Caco-2 (cell line): ENCODE measurements at regions of chr5 and their contacts with region 1.

Region 1: DNA sequence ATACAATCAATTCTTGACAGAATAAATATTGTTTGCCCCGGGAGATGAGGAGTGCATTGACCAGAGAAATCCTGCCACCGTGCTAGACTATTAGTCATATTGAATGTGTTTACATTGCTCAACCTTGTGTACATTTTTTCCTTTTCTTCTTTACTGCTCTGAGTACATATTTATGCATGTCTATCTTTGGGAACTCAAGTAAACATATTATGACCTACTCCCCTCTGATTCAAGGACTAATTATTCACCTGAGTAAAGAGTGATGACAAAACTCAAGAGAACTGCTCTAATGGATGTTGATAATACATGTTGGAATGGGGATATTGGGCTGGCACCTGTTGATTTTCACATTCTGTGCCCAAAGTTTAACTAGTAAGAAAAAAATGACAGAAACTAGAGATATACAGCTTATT is 3.9 kb upstream of the SPINK1 start:
- DNase-seq: peak in 1 of 2 experiments; percentile 65
- H3K4me3 ChIP-seq: no peak overlapping the region
- H3K4me3 Mint-ChIP-seq: peak overlapping the region; percentile 10
- H3K27ac Mint-ChIP-seq: peak overlapping the region; percentile 48
- H3K4me1 ChIP-seq: peaks cover 81% of the 10 kb centered on the region
- H3K4me1 Mint-ChIP-seq: peaks cover 53% of the 10 kb centered on the region
- H3K27me3 ChIP-seq: no peaks in the 10 kb centered on the region
- H3K27me3 Mint-ChIP-seq: no peaks in the 10 kb centered on the region
- CTCF ChIP-seq: no peak

Region 2: GRCh38 chr5:147403651-147404640 is 431.4 kb before region 1 on chr5:
- CTCF ChIA-PET with region 1: no interaction called
- POLR2A ChIA-PET with region 1: no interaction called
- intact Hi-C with region 1: loop called (anchors 10 kb)
- DNase-seq: no peak
- H3K4me3 ChIP-seq: no peak overlapping the region
- H3K4me3 Mint-ChIP-seq: no peak overlapping the region
- H3K27ac Mint-ChIP-seq: peak overlapping the region; percentile 74
- H3K4me1 ChIP-seq: peaks cover 83% of the 10 kb centered on the region
- H3K4me1 Mint-ChIP-seq: peaks cover 43% of the 10 kb centered on the region
- H3K27me3 ChIP-seq: no peaks in the 10 kb centered on the region
- H3K27me3 Mint-ChIP-seq: no peaks in the 10 kb centered on the region
- CTCF ChIP-seq: no peak

Region 3: DNA sequence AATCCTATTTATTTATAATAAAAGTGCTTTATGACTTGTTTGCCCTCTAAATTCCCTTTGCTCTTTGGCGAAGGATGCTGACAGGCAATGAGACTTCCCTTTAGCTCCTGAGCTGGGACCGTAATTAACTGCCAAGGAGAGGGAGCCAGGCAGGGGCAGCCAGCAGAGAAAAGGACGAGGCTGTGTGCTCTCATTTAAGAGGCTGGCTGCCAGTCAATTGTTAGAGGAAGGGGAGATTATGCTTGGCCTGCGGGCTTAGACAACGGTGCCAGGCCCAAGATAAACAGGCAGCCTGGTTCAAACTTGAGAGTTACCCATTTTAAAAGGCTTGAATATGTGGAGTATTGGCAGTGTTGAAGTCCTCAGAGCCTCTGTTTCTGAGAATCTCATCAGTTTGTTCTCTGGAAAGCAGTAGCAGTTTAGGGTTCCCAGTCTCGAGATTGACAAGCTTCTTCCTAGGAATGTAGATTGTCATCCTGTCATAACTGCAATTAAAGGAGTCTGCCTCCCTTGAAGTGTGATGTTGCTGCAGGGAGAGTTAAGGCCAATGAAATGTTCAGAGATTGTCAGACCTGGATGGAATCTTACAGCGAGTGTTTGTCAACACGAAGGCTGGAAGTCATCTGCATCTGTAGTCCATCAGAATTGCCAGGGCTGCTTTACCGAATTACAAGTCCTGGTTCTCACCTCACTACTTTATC is 166.1 kb before region 1 on chr5:
- CTCF ChIA-PET with region 1: no interaction called
- POLR2A ChIA-PET with region 1: no interaction called
- intact Hi-C with region 1: loop called (anchors 5 kb)
- DNase-seq: peak in 1 of 2 experiments; percentile 21
- H3K4me3 ChIP-seq: no peak overlapping the region
- H3K4me3 Mint-ChIP-seq: no peak overlapping the region
- H3K27ac Mint-ChIP-seq: no peak overlapping the region
- H3K4me1 ChIP-seq: peaks cover 33% of the 10 kb centered on the region
- H3K4me1 Mint-ChIP-seq: peaks cover 14% of the 10 kb centered on the region
- H3K27me3 ChIP-seq: no peaks in the 10 kb centered on the region
- H3K27me3 Mint-ChIP-seq: no peaks in the 10 kb centered on the region
- CTCF ChIP-seq: no peak

Region 4: DNA sequence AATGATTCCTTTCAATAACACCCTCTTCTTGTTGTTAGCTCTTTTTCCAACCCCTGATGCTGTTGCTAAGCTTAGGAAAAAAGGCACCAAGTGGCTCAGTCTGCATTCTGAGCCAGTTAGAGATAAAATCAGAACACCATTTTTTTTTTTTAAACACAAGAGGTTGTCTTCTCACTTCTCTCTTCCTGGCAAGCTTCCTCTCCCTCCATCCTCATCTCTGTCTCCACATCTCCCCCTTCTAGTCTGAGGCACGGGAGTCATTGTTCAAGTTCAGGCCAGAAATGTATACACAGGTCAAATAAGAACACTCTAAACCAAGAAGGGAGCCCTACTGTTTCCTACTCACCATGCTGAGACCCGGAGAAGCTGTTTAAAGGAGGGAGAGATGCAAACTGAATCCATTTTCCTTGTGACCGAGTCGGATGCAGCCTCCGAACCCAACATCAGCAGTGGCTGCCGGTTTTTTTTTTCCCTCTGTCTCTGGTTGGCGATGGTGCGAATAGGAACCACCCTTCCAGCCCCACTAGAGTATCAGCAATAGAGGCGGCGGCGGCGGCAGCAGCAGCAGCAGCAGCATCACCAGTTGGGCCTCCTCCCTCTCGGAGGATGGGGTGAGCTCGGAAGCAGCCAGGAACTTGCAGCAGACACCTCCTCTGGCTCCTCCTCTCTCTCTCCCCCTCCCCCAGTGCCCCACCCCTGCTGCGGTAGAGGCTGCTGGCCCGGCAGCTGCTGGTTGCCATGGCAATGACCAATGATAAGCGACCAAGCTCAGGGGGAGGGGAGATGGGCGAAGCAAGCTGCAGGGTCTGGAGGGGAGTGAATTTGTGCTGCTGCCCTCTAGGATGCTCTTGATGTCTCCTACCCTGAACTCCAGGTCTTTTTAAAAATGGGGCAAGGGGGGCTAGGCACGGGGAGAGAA is 53.0 kb before region 1 on chr5 and contains the start of gene JAKMIP2:
- CTCF ChIA-PET with region 1: interaction called, 3 read pairs
- POLR2A ChIA-PET with region 1: no interaction called
- intact Hi-C with region 1: loop called (anchors 2 kb)
- DNase-seq: peak; percentile 87 to 92
- H3K4me3 ChIP-seq: peak within 1 kb of the TSS; percentile 24
- H3K4me3 Mint-ChIP-seq: peak within 1 kb of the TSS; percentile 72
- H3K27ac Mint-ChIP-seq: peak within 1 kb of the TSS; percentile 7
- H3K4me1 ChIP-seq: no peaks in the 10 kb centered on the region
- H3K4me1 Mint-ChIP-seq: peaks cover 7% of the 10 kb centered on the region
- H3K27me3 ChIP-seq: no peaks in the 10 kb centered on the region
- H3K27me3 Mint-ChIP-seq: no peaks in the 10 kb centered on the region
- CTCF ChIP-seq: no peak
- total RNA-seq, gene JAKMIP2: 0.58 and 1.2 TPM in 2 replicates

Region 5: GRCh38 chr5:147857302-147858129 is 22.1 kb after region 1 on chr5:
- CTCF ChIA-PET with region 1: interaction called, 4 read pairs
- POLR2A ChIA-PET with region 1: no interaction called
- intact Hi-C with region 1: loop called (anchors 1 kb)
- DNase-seq: peak; percentile 66 to 71
- H3K4me3 ChIP-seq: no peak overlapping the region
- H3K4me3 Mint-ChIP-seq: no peak overlapping the region
- H3K27ac Mint-ChIP-seq: no peak overlapping the region
- H3K4me1 ChIP-seq: no peaks in the 10 kb centered on the region; the same call in 1 of the 2 replicates
- H3K4me1 Mint-ChIP-seq: peaks cover 6% of the 10 kb centered on the region
- H3K27me3 ChIP-seq: no peaks in the 10 kb centered on the region
- H3K27me3 Mint-ChIP-seq: no peaks in the 10 kb centered on the region
- CTCF ChIP-seq: peak; percentile 77 to 81

Region 6: DNA sequence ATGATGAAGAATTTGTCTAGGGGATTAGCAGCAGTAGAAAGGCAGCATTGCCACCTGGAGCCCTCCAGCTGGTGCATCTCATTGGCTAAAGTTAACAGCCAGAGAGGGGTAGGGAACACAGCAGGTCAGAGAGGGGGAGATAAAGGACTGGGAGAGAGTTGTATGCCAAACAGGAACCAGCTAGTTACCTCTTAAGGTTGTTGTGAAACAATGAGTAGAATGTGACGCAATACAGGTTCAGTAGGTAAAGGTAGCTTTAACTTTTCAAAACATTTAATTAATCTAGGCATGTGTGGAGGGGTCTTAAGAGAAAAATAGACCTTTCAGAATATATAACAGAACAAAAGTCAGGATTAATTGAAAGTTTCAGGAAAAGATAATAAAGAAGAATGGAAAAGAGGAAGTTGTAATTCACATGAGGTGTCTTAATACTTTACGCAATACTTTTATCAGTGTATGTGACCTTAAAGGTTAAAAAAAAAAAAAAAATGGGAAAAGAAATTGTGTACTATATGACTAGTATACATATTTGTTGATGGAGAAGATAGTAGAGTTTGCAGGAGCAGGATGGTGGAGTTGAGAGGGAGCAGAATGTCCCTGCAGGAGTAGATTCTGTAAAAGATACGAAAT is 562.7 kb after region 1 on chr5:
- CTCF ChIA-PET with region 1: no interaction called
- POLR2A ChIA-PET with region 1: no interaction called
- intact Hi-C with region 1: loop called (anchors 5 kb)
- DNase-seq: peak; percentile 64 to 75
- H3K4me3 ChIP-seq: no peak overlapping the region
- H3K4me3 Mint-ChIP-seq: peak overlapping the region; percentile 27
- H3K27ac Mint-ChIP-seq: peak overlapping the region; percentile 67
- H3K4me1 ChIP-seq: peaks cover 46% of the 10 kb centered on the region
- H3K4me1 Mint-ChIP-seq: peaks cover 35% of the 10 kb centered on the region
- H3K27me3 ChIP-seq: no peaks in the 10 kb centered on the region
- H3K27me3 Mint-ChIP-seq: no peaks in the 10 kb centered on the region
- CTCF ChIP-seq: no peak